Activated T-helper 2 cell treated with anti-CD3 and anti-CD28 coated beads, Interferon-gamma antibody, Interleukin-2, Interleukin-4, amounts not matched to agents 10 μg/mL and 5 μg/mL and 100 μg/mL, durations not matched to agents 14 hours and 24 hours and 36 hours (primary cell): ENCODE measurements at regions of chr15 and their contacts with region 1.

Region 1: DNA sequence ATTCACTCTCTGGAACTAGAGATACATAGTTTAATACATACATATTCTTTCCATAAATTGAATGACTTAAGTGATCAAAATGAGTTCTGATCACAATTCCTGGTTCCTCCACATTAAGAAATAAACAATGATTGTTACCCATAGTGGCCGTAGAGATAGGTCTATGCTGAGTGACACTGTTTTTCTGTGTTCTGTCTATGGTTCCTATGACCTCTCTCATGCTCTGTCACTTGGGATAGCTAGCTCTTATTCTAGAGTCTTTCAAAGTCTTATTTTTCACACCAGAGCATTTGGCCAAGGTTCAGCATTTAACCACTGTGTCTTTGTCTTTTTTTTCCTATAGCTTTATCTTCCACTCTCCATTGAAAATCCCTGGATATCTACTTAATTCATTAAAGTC is 132.4 kb downstream of the GOLGA6L6 start:
- DNase-seq: no peak
- H3K4me3 Mint-ChIP-seq: no peak overlapping the region
- H3K27ac Mint-ChIP-seq: no peak overlapping the region
- H3K4me1 Mint-ChIP-seq: no peaks in the 10 kb centered on the region
- H3K27me3 Mint-ChIP-seq: no peaks in the 10 kb centered on the region

Region 2: GRCh38 chr15:20356444-20356910 is 52.8 kb before region 1 on chr15:
- intact Hi-C with region 1: loop called (anchors 10 kb)
- DNase-seq: peak; percentile 67
- H3K4me3 Mint-ChIP-seq: no peak overlapping the region
- H3K27ac Mint-ChIP-seq: no peak overlapping the region
- H3K4me1 Mint-ChIP-seq: peaks cover 5% of the 10 kb centered on the region
- H3K27me3 Mint-ChIP-seq: no peaks in the 10 kb centered on the region